H1 (cell line): ENCODE measurements at regions of chr1 and their contacts with region 1.

Region 1: DNA sequence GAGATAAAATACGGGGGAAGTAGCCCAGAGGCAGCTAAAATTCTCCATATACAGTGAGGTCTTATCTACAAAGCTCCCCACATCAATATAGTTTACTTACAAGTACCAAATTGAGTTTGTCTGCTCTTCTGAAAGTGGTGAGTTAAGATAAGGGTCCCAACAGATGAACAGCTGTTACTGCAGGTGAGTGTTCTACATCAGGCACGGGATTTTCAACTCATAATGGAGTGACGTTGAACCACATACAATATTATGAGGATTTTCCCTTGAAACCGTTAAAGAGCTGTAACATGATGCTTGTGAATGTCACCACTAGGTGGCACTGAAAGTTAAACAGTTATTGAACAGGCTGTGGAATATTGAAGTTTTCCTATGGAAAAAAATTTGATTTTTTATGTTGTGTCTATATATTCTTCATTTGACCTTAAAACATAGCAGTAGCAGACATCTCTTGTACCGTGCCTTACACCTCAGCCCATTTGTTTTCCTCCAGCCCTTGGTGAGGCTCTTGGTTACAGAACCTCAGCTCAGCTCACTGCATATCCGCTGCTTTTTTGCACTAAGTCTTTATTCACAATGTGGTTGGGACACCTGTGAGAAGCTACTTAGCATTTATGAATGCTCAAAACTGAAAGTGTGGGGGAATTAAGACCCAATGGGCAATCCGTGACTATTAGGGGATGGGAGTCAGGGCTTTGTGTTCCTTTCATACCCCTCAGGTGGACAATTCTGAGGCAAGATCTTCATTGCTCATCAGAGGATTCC is 23.2 kb downstream of the CD1D start:
- DNase-seq: no peak
- H3K4me3 ChIP-seq: peak overlapping the region in 1 of 4 experiments; percentile 38; a peak in 1 of 8 replicates
- H3K27ac ChIP-seq: no peak overlapping the region
- H3K4me1 ChIP-seq: peaks cover 0 to 3% (median under 1%) of the 10 kb centered on the region in 4 experiments; a peak in 1 of 7 replicates
- H3K27me3 ChIP-seq: no peaks in the 10 kb centered on the region
- CTCF ChIP-seq: peak in 2 of 3 experiments; percentile 40 to 68; a peak in 2 of 4 replicates
- EP300 ChIP-seq: no peak
- POLR2A ChIP-seq: no peak
- RAD21 ChIP-seq: peak; percentile 68 to 69

Region 2: GRCh38 chr1:158185770-158186705 is 17.8 kb before region 1 on chr1:
- CTCF ChIA-PET with region 1: interaction called, 23 read pairs
- POLR2A ChIA-PET with region 1: interaction called, 4 read pairs
- DNase-seq: peak in 1 of 2 experiments; percentile 39
- H3K4me3 ChIP-seq: 0 out of 8 replicates have a peak overlapping the region, but pooled peaks of 1 of the 4 experiments have one; percentile 0
- H3K27ac ChIP-seq: no peak overlapping the region
- H3K4me1 ChIP-seq: peaks cover 3 to 15% (median 6%) of the 10 kb centered on the region in 4 experiments; a peak in 6 of 7 replicates
- H3K27me3 ChIP-seq: peaks cover 18 to 37% (median 32%) of the 10 kb centered on the region in 4 experiments
- CTCF ChIP-seq: no peak
- EP300 ChIP-seq: no peak
- POLR2A ChIP-seq: no peak
- RAD21 ChIP-seq: no peak

Region 3: DNA sequence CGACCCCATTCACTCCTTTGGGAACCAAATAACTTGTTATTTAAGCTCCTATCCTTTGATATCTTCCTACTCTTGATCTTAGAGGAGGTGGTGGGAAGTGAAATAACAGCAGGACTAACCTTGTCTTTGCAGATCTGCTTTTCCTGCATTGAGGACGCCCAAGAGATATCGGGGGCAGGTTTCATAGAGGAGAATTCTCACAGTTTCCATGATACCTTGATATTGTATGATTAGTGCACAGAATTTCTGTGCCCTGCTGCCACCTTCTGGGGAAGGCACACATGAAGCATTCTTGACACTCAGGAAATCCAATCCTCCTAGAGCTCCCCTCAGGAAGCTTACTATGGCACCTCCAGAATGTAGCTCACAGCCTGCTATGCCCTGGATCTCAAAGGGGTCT is 125.9 kb after region 1 on chr1:
- CTCF ChIA-PET with region 1: interaction called, 33 read pairs
- POLR2A ChIA-PET with region 1: no interaction called
- DNase-seq: no peak
- H3K4me3 ChIP-seq: no peak overlapping the region
- H3K27ac ChIP-seq: no peak overlapping the region
- H3K4me1 ChIP-seq: no peaks in the 10 kb centered on the region
- H3K27me3 ChIP-seq: no peaks in the 10 kb centered on the region
- CTCF ChIP-seq: peak; percentile 1 to 48 (median 39)
- EP300 ChIP-seq: no peak
- POLR2A ChIP-seq: no peak
- RAD21 ChIP-seq: peak; percentile 54 to 66

Region 4: DNA sequence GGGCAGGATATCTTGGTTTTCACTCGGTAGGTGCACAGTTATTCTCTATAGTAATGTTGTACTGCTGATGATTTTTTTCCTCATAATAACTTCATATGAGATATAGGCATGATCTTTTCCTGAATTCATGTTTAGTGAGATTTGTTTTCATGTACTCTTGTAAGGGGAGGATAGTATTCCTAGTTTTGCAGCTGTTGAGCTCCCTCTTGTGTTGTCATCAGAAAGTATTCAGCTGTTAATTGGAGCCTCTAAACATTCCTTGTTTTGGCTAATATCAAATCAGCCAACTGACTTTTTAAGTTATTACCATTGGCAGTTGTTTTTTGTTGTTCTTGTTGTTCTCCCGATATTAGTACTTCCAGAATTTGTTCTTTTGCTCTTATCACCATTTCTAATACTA is 292.5 kb after region 1 on chr1:
- CTCF ChIA-PET with region 1: interaction called, 42 read pairs
- POLR2A ChIA-PET with region 1: no interaction called
- DNase-seq: no peak
- H3K4me3 ChIP-seq: no peak overlapping the region
- H3K27ac ChIP-seq: no peak overlapping the region
- H3K4me1 ChIP-seq: no peaks in the 10 kb centered on the region
- H3K27me3 ChIP-seq: no peaks in the 10 kb centered on the region
- CTCF ChIP-seq: peak in 2 of 3 experiments; percentile 45 to 60; a peak in 2 of 4 replicates
- EP300 ChIP-seq: no peak
- POLR2A ChIP-seq: no peak
- RAD21 ChIP-seq: peak; percentile 85 to 88